Activated naive CD4-positive, alpha-beta T cell treated with anti-CD3 and anti-CD28 coated beads for 36 hours (primary cell): ENCODE measurements at regions of chr5 and their contacts with region 1.

Region 1: DNA sequence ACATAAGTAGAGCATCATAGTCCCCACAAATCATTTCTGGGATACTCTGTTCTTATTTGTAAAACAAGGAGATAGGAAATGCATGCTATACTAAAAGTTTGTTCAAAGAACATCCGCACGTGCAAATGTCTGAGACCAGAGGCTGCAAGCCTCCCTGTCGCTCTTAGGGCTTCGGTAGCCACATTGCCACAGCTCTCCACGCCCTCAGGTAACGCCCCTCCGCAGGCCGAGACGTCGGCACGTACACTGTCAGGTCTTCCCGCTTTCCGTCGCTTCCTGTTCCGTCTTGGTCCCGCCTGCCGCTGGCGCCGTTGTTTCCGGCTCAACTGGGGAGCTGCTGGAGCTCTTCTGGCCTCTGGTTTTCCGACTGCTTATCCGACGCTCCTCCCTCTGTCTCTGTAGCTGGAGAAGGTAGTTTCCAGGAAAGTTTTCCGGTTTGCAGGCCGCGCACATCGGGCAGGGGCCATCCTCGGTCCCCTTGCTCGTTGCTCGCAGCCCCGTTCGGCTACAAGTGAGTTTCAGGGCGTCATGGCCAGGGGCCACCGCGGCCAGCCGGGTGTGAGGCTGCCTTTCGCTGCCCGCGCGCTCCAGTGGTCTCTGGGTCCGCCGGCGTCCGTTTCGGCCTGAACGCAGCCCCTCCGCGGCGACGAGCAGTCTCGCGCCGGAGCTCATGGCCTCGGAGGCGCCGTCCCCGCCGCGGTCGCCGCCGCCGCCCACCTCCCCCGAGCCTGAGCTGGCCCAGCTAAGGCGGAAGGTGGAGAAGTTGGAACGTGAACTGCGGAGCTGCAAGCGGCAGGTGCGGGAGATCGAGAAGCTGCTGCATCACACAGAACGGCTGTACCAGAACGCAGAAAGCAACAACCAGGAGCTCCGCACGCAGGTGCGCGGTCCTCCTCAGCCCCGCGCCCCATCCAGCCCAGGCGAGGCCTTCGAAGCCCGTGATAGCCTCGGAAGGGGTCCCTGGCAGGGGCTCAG is at the start of gene AGGF1:
- DNase-seq: peak; percentile 96
- H3K4me3 Mint-ChIP-seq: peak within 1 kb of the TSS; percentile 91
- H3K27ac Mint-ChIP-seq: peak within 1 kb of the TSS; percentile 88
- H3K4me1 Mint-ChIP-seq: peaks cover 23% of the 10 kb centered on the region
- H3K27me3 Mint-ChIP-seq: no peaks in the 10 kb centered on the region
- total RNA-seq, gene AGGF1: 20.3 to 23.0 TPM

Region 2: DNA sequence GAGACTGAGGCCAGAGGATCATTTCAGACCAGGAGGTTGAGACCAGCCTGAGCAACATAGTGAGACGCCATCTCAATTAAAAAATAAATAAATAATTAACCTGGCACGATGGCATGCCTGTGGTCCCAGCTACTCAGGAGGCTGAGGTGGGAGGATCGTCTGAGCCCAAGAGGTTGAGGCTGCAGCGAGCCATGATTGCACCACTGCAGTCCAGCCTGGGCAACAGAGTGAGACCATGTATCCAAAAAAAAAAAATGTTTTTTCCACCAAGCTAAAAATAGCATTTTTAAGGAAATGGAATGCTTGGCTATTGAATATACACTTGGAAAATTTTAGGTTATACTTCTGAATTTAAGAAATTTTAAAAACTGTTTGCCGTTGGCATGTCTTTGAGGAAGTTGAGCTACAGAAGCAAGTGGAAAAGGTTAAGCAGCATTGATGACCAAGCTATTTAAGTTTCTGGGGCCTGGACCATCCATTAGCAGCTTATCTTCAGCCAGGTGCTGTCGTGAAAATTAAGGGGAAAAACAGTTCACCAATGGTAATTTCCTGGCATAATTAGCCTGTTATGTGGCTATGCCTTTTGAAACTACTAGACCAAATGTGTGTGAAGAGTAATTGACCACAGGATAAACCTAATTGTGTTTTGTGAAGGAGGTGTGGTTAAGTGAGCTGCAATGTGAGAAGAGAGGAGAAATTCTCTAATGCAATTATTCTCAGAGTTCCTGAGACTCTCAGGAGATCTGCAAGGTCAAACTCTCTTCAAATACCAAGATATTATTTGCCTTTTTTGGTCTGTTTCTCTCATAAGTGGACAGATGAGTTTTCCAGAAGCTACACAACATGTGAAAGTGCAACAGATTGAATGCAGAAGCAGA is 293.5 kb before region 1 on chr5:
- CTCF ChIA-PET with region 1: no interaction called
- intact Hi-C with region 1: loop called (anchors 1 kb)
- DNase-seq: no peak
- H3K4me3 Mint-ChIP-seq: no peak overlapping the region
- H3K27ac Mint-ChIP-seq: no peak overlapping the region
- H3K4me1 Mint-ChIP-seq: peaks cover 19% of the 10 kb centered on the region
- H3K27me3 Mint-ChIP-seq: no peaks in the 10 kb centered on the region

Region 3: DNA sequence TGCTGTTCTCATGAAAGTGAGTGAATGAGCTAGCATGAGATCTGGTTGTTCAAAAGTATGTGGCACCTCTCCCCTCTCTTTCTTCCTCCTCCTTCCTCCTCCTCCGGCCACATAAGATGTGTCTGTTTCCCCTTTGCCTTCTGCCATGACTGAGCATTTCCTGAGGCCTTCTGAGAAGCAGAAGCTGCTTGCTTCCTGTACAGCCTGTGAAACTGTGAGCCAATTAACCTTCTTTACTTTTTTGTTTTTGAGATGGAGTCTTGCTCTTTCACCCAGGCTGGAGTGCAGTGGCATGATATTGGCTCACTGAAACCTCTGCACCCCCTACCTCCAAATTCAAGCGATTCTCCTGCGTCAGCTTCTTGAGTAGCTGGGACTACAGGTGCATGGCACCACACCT is 174.4 kb before region 1 on chr5:
- CTCF ChIA-PET with region 1: no interaction called
- intact Hi-C with region 1: loop called (anchors 5 kb)
- DNase-seq: peak; percentile 68
- H3K4me3 Mint-ChIP-seq: peak overlapping the region; percentile 19
- H3K27ac Mint-ChIP-seq: peak overlapping the region; percentile 79
- H3K4me1 Mint-ChIP-seq: peaks cover 16% of the 10 kb centered on the region
- H3K27me3 Mint-ChIP-seq: no peaks in the 10 kb centered on the region

Region 4: DNA sequence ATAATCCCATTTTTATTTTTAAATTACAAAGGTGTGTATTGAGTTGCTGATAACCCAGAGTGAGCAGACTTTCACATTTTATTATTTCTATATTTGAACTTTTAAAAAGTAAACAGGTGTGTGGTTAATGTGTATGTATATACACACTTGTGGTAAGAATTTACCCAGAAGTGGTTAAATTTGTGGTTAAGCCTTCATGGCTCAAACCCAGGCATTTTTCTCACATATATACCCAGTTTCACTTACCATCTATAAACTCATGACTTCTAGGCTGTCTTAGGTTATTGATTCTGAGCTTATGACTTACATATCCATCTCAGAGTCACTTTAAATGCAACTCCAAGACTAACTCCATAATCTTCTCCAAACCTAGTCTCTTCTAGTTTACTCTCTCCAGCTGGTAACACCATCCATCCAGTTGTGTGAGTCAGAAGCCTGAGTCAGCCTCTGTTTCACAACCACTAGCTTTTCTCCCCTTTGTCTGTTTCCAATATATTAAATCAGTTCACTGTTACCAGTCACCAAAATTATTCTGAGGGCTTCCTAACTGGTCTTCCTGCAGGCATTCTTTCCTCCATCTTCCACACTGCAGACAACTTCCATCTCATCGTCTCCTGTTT is 36.5 kb after region 1 on chr5:
- CTCF ChIA-PET with region 1: no interaction called
- intact Hi-C with region 1: no loop called
- DNase-seq: no peak
- H3K4me3 Mint-ChIP-seq: no peak overlapping the region
- H3K27ac Mint-ChIP-seq: no peak overlapping the region
- H3K4me1 Mint-ChIP-seq: no peaks in the 10 kb centered on the region
- H3K27me3 Mint-ChIP-seq: no peaks in the 10 kb centered on the region

Region 5: GRCh38 chr5:77086689-77087483 is 56.5 kb after region 1 on chr5 and contains the start of gene ZBED3:
- CTCF ChIA-PET with region 1: interaction called, 4 read pairs
- intact Hi-C with region 1: loop called (anchors 1 kb)
- DNase-seq: peak; percentile 73
- H3K4me3 Mint-ChIP-seq: peak within 1 kb of the TSS; percentile 87
- H3K27ac Mint-ChIP-seq: peak within 1 kb of the TSS; percentile 36
- H3K4me1 Mint-ChIP-seq: peaks cover 9% of the 10 kb centered on the region
- H3K27me3 Mint-ChIP-seq: no peaks in the 10 kb centered on the region
- total RNA-seq, gene ZBED3: 1.9 to 3.3 TPM

Region 6: GRCh38 chr5:78294248-78295034 is 1264.1 kb after region 1 on chr5 and contains the start of gene AP3B1:
- CTCF ChIA-PET with region 1: no interaction called
- intact Hi-C with region 1: loop called (anchors 1 kb)
- DNase-seq: peak; percentile 97
- H3K4me3 Mint-ChIP-seq: peak within 1 kb of the TSS; percentile 91
- H3K27ac Mint-ChIP-seq: peak within 1 kb of the TSS; percentile 97
- H3K4me1 Mint-ChIP-seq: peaks cover 32% of the 10 kb centered on the region
- H3K27me3 Mint-ChIP-seq: no peaks in the 10 kb centered on the region
- total RNA-seq, gene AP3B1: 29.9 to 33.0 TPM